ENCODE measurements at regions of chr20 and their contacts with region 1.

Region 1: GRCh38 chr20:24045621-24046318 is 57.2 kb upstream of the GGTLC1 start:
- DNase-seq: peak; percentile 24
- H3K4me3 Mint-ChIP-seq: peak overlapping the region; percentile 3
- H3K27ac Mint-ChIP-seq: peak overlapping the region; percentile 79
- H3K4me1 Mint-ChIP-seq: peaks cover 49% of the 10 kb centered on the region
- H3K27me3 Mint-ChIP-seq: no peaks in the 10 kb centered on the region

Region 2: DNA sequence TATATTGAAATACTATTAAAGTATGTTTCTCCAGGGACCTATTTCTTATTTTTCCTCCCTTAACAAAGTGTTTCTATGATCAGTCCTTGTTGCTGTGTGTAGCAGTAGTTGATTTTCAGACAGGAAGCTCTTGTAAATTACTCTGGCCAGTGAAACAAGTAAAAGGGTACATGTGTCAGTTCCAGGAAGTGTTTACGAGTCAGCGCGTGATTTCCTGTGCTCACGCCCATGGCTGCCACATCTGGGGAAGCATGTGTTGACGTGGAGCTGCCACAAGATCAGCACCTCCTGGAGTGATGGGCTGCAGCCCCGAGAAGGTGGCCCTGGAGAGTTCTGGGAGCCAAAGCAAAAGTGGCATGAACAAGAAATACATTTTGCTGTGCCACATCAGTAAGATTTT is 18.5 kb before region 1 on chr20:
- intact Hi-C with region 1: loop called (anchors 1 kb)
- DNase-seq: peak; percentile 82
- H3K4me3 Mint-ChIP-seq: peak overlapping the region; percentile 50
- H3K27ac Mint-ChIP-seq: peak overlapping the region; percentile 86
- H3K4me1 Mint-ChIP-seq: peaks cover 56% of the 10 kb centered on the region
- H3K27me3 Mint-ChIP-seq: no peaks in the 10 kb centered on the region